ENCODE measurements at regions of chr1 and their contacts with region 1.

Region 1: GRCh38 chr1:26874896-26875295 is 11.9 kb downstream of the SFN start:
- DNase-seq: no peak
- H3K4me3 Mint-ChIP-seq: no peak overlapping the region
- H3K27ac Mint-ChIP-seq: no peak overlapping the region
- H3K4me1 Mint-ChIP-seq: no peaks in the 10 kb centered on the region
- H3K27me3 Mint-ChIP-seq: no peaks in the 10 kb centered on the region
- CTCF ChIP-seq: no peak

Region 2: DNA sequence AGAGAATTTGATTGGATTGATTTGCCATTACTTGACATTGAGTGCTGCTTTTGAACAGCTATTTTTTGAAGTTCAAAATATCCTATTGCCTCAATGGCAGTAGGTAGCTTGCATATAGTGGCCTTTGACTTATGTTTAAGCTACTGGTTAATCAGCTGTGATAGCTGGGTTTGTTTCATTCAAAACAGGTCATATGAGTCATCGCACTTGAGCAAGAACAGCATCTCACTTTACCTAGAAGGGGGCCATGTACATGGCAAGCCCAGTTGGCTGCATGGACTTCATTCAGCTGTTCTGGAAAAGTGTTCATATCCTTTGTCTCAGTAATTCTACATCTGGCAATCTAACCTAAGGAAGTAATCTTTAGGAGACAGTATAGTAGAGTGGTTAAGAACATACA is 208.0 kb before region 1 on chr1:
- CTCF ChIA-PET with region 1: no interaction called
- intact Hi-C with region 1: no loop called
- DNase-seq: no peak
- H3K4me3 Mint-ChIP-seq: no peak overlapping the region
- H3K27ac Mint-ChIP-seq: no peak overlapping the region
- H3K4me1 Mint-ChIP-seq: no peaks in the 10 kb centered on the region
- H3K27me3 Mint-ChIP-seq: no peaks in the 10 kb centered on the region
- CTCF ChIP-seq: no peak

Region 3: GRCh38 chr1:26697978-26698849 is 176.7 kb before region 1 on chr1:
- CTCF ChIA-PET with region 1: no interaction called
- intact Hi-C with region 1: no loop called
- DNase-seq: peak; percentile 35
- H3K4me3 Mint-ChIP-seq: no peak overlapping the region
- H3K27ac Mint-ChIP-seq: no peak overlapping the region
- H3K4me1 Mint-ChIP-seq: peaks cover 15% of the 10 kb centered on the region
- H3K27me3 Mint-ChIP-seq: no peaks in the 10 kb centered on the region
- CTCF ChIP-seq: no peak

Region 4: DNA sequence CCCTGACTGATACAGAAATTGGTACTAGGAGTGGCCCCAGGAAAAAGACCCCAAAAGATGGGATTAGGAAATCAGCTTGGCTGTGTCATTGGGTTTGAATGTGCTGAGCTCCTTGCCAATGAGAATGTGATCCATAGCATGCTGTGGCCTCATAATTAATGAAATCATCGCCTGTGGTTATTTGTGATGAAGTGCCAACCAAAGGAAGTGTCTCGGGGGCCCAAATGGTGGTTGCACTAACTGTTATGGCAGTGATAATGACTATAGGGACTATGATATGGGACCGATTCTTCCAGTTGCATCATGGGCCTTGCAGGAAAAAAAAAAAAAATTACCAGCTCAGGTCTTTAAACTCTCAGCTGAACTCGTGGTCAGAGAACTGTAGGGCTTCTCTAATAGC is 63.8 kb before region 1 on chr1:
- CTCF ChIA-PET with region 1: no interaction called
- intact Hi-C with region 1: loop called (anchors 2 kb)
- DNase-seq: no peak
- H3K4me3 Mint-ChIP-seq: no peak overlapping the region
- H3K27ac Mint-ChIP-seq: no peak overlapping the region
- H3K4me1 Mint-ChIP-seq: no peaks in the 10 kb centered on the region
- H3K27me3 Mint-ChIP-seq: no peaks in the 10 kb centered on the region
- CTCF ChIP-seq: no peak

Region 5: GRCh38 chr1:26853156-26853555 is 21.7 kb before region 1 on chr1:
- CTCF ChIA-PET with region 1: no interaction called
- intact Hi-C with region 1: loop called (anchors 1 kb)
- DNase-seq: peak; percentile 93
- H3K4me3 Mint-ChIP-seq: no peak overlapping the region
- H3K27ac Mint-ChIP-seq: no peak overlapping the region
- H3K4me1 Mint-ChIP-seq: peaks cover 17% of the 10 kb centered on the region
- H3K27me3 Mint-ChIP-seq: no peaks in the 10 kb centered on the region
- CTCF ChIP-seq: peak; percentile 70